ENCODE measurements at regions of chr2 and their contacts with region 1.

Region 1: DNA sequence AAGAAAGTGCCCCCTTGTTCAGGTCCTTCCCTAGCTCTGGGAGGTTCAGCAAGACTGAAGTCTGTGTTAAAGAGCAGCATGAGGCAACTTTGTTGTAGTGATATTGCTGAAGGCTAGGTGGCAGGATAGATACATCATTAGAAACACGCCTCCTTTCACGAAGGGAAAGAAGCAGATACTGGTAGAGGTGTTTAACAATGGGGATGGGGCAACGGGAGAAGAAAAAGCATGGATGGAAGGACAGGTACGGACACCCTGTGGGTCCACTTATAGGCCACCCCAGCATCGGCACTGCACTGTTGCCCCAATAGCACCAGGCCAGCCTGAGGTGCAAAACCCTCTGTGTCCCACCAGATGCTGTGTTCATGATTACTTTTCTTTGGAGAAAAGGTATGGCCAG is 3.5 kb upstream of the IGFBP5 start:
- DNase-seq: peak; percentile 36
- H3K4me3 ChIP-seq: no peak overlapping the region
- H3K27ac ChIP-seq: peak overlapping the region in 1 of 2 donors; percentile 12
- H3K4me1 ChIP-seq: peaks cover 6% of the 10 kb centered on the region
- H3K27me3 ChIP-seq: no peaks in the 10 kb centered on the region
- CTCF ChIP-seq: peak; percentile 33 to 72 (median 58)
- POLR2A ChIP-seq: no peak

Region 2: DNA sequence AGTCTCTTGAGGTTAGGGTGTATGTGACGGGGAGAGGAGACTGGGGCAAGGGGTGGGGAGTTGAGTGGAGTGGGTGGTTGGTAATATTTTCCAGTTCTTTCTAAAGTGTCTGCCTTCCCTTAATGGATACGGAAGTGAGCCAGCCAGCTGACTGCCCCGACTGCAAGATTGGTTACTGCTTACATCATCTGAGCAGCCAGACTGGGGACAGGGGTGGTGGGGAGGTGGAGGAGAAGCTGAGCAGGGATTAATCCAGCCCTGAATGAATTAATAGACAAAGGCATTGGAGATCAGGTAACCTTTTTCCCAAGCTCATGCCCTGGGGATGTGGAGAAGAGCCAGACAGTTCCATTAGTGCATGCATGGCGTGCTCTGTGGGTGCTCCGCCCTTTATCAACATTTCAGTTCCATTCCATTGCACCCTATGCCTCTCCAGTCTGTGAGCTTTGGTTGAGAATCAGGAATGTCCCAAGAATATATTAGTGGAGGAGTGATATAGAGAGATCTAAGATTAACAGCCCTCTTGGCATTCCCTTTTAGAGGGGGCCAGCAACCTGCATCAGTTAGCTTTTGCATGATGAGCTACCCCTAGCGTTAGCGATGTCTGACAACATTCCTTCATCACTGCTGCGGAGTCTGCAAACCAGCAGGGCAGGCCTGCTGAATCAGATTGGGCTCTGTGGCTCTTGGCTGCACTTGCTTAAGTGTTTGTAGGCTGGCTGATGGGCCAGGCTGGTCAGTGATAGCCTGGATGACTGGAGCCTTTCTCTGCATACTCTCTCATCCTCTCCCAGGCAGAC is 93.5 kb after region 1 on chr2:
- intact Hi-C with region 1: no loop called
- DNase-seq: no peak
- H3K4me3 ChIP-seq: no peak overlapping the region
- H3K27ac ChIP-seq: peak overlapping the region in 1 of 2 donors; percentile 6
- H3K4me1 ChIP-seq: no peaks in the 10 kb centered on the region
- H3K27me3 ChIP-seq: no peaks in the 10 kb centered on the region
- CTCF ChIP-seq: no peak
- POLR2A ChIP-seq: no peak

Region 3: GRCh38 chr2:217166241-217166850 is 467.5 kb after region 1 on chr2:
- intact Hi-C with region 1: loop called (anchors 2 kb)
- DNase-seq: no peak
- H3K4me3 ChIP-seq: no peak overlapping the region
- H3K27ac ChIP-seq: no peak overlapping the region
- H3K4me1 ChIP-seq: no peaks in the 10 kb centered on the region
- H3K27me3 ChIP-seq: no peaks in the 10 kb centered on the region
- CTCF ChIP-seq: peak in 2 of 4 experiments; percentile 36 to 44
- POLR2A ChIP-seq: no peak

Region 4: GRCh38 chr2:217415316-217415715 is 716.4 kb after region 1 on chr2:
- intact Hi-C with region 1: loop called (anchors 5 kb)
- DNase-seq: no peak
- H3K4me3 ChIP-seq: no peak overlapping the region
- H3K27ac ChIP-seq: no peak overlapping the region
- H3K4me1 ChIP-seq: no peaks in the 10 kb centered on the region
- H3K27me3 ChIP-seq: no peaks in the 10 kb centered on the region
- CTCF ChIP-seq: no peak
- POLR2A ChIP-seq: no peak

Region 5: GRCh38 chr2:217643789-217644301 is 945.0 kb after region 1 on chr2:
- intact Hi-C with region 1: loop called (anchors 5 kb)
- DNase-seq: no peak
- H3K4me3 ChIP-seq: no peak overlapping the region
- H3K27ac ChIP-seq: peak overlapping the region in 1 of 2 donors; percentile 61
- H3K4me1 ChIP-seq: no peaks in the 10 kb centered on the region
- H3K27me3 ChIP-seq: no peaks in the 10 kb centered on the region
- CTCF ChIP-seq: no peak
- POLR2A ChIP-seq: no peak

Region 6: GRCh38 chr2:217756375-217757107 is 1057.6 kb after region 1 on chr2:
- intact Hi-C with region 1: loop called (anchors 5 kb)
- DNase-seq: peak; percentile 38
- H3K4me3 ChIP-seq: no peak overlapping the region
- H3K27ac ChIP-seq: no peak overlapping the region
- H3K4me1 ChIP-seq: no peaks in the 10 kb centered on the region
- H3K27me3 ChIP-seq: no peaks in the 10 kb centered on the region
- CTCF ChIP-seq: peak; percentile 58 to 77 (median 69)
- POLR2A ChIP-seq: no peak